ENCODE measurements at regions of chr5 and their contacts with region 1.

Region 1: DNA sequence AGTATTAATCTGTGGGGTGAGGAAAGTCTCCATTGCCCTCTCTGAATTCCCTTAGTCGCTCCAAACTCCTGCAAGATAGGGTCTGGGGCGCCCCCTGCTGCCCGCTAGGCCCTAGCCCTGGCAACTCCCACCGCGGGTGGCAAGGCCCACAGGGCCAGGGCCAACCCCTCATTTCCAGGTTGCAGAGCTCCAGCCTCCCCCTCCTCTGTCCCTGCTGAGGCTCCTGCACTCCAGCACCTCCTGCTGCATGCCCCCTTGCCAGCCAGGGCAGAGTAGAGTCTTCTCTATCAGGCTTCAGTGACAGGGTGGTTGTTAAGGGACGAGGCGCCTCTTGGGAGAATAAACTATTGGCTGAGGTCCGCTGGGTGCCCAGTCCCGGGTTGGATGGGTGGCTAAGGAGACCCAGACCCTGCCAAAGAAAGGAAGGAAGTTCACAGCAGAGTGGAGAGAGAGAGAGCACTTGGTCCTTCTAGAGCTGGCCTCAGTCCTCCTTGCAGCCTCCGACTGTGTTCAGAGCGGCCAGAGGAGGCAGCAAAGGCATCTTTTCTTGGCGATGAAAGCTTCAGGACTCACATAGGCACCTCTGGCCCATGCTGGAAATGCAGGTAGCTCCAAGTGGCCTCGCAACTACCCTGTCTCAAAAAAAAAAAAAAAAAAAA is 45.6 kb downstream of the SAR1B start:
- DNase-seq: peak; percentile 95
- ATAC-seq: peak; percentile 89
- H3K4me3 Mint-ChIP-seq: peak overlapping the region; percentile 22
- H3K27ac Mint-ChIP-seq: peak overlapping the region; percentile 93
- H3K4me1 Mint-ChIP-seq: peaks cover 17% of the 10 kb centered on the region
- H3K27me3 Mint-ChIP-seq: no peaks in the 10 kb centered on the region
- CTCF ChIP-seq: peak; percentile 76

Region 2: DNA sequence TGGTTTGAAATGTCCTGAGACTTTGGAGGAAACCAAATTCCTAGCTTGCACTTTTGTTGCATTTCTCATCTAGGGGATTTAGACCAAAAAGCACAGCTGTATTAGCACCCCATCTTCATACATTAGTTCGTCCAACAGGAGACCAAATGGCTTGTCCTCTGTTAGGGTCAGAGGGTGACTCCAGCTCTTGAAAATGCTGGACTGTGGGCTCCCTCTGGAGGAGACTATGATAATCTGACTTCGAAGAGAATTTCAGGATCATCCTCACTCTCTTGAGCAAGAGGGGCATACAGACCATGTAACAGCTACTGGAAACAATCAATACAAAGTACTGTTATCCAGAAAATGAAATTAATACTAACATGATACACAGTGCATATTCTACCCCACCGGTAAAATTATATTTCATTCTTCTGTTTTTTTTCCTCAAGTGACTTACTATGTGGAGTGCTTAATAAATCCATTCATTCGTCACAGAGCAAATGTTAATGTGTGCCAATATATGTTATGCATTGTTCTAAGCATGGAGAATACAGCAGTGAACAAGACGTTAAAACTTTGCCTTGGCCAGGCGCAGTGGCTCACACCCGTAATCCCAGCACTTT is 297.4 kb before region 1 on chr5:
- CTCF ChIA-PET with region 1: interaction called, 14 read pairs
- POLR2A ChIA-PET with region 1: no interaction called
- DNase-seq: peak; percentile 50
- ATAC-seq: peak; percentile 100
- H3K4me3 Mint-ChIP-seq: no peak overlapping the region
- H3K27ac Mint-ChIP-seq: no peak overlapping the region
- H3K4me1 Mint-ChIP-seq: no peaks in the 10 kb centered on the region
- H3K27me3 Mint-ChIP-seq: peaks cover 19% of the 10 kb centered on the region
- CTCF ChIP-seq: peak; percentile 55

Region 3: GRCh38 chr5:134394932-134395331 is 192.1 kb before region 1 on chr5:
- CTCF ChIA-PET with region 1: interaction called, 21 read pairs
- POLR2A ChIA-PET with region 1: interaction called, 10 read pairs
- DNase-seq: no peak
- ATAC-seq: peak; percentile 48
- H3K4me3 Mint-ChIP-seq: no peak overlapping the region
- H3K27ac Mint-ChIP-seq: no peak overlapping the region
- H3K4me1 Mint-ChIP-seq: peaks cover 11% of the 10 kb centered on the region
- H3K27me3 Mint-ChIP-seq: no peaks in the 10 kb centered on the region
- CTCF ChIP-seq: no peak

Region 4: DNA sequence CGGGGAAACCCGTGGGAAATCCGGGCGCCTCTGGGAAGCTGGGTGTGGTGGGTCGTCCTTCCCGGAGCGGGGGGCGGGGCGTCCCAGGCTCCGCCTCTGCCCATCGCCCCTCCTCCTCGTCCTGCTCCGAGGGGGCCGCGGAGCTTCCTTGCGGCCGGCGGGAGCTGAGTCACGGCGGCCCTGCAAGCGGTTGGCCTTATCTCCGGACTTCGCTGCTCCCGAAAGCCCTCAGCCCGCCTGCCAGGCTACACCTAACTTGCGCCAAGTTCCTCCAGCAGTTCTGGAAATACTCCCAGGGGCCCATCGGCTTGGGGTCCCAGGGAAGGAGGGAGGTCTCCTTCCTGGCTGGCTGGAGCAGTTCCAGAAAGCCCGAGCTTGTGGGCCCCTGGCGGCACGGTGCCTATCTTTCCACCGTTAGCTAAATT is 121.2 kb before region 1 on chr5:
- CTCF ChIA-PET with region 1: interaction called, 42 read pairs
- POLR2A ChIA-PET with region 1: interaction called, 3 read pairs
- DNase-seq: peak; percentile 89
- ATAC-seq: peak; percentile 77
- H3K4me3 Mint-ChIP-seq: peak overlapping the region; percentile 86
- H3K27ac Mint-ChIP-seq: peak overlapping the region; percentile 94
- H3K4me1 Mint-ChIP-seq: peaks cover 20% of the 10 kb centered on the region
- H3K27me3 Mint-ChIP-seq: no peaks in the 10 kb centered on the region
- CTCF ChIP-seq: no peak

Region 5: GRCh38 chr5:134541736-134542376 is 45.1 kb before region 1 on chr5:
- CTCF ChIA-PET with region 1: interaction called, 21 read pairs
- POLR2A ChIA-PET with region 1: no interaction called
- DNase-seq: peak; percentile 82
- ATAC-seq: peak; percentile 13
- H3K4me3 Mint-ChIP-seq: no peak overlapping the region
- H3K27ac Mint-ChIP-seq: no peak overlapping the region
- H3K4me1 Mint-ChIP-seq: peaks cover 36% of the 10 kb centered on the region
- H3K27me3 Mint-ChIP-seq: no peaks in the 10 kb centered on the region
- CTCF ChIP-seq: no peak

Region 6: GRCh38 chr5:134626369-134627014 is 39.5 kb after region 1 on chr5:
- CTCF ChIA-PET with region 1: interaction called, 17 read pairs
- POLR2A ChIA-PET with region 1: interaction called, 3 read pairs
- DNase-seq: no peak
- ATAC-seq: no peak
- H3K4me3 Mint-ChIP-seq: no peak overlapping the region
- H3K27ac Mint-ChIP-seq: peak overlapping the region; percentile 6; the same call in 1 of the 2 replicates
- H3K4me1 Mint-ChIP-seq: no peaks in the 10 kb centered on the region
- H3K27me3 Mint-ChIP-seq: no peaks in the 10 kb centered on the region
- CTCF ChIP-seq: no peak

Region 7: DNA sequence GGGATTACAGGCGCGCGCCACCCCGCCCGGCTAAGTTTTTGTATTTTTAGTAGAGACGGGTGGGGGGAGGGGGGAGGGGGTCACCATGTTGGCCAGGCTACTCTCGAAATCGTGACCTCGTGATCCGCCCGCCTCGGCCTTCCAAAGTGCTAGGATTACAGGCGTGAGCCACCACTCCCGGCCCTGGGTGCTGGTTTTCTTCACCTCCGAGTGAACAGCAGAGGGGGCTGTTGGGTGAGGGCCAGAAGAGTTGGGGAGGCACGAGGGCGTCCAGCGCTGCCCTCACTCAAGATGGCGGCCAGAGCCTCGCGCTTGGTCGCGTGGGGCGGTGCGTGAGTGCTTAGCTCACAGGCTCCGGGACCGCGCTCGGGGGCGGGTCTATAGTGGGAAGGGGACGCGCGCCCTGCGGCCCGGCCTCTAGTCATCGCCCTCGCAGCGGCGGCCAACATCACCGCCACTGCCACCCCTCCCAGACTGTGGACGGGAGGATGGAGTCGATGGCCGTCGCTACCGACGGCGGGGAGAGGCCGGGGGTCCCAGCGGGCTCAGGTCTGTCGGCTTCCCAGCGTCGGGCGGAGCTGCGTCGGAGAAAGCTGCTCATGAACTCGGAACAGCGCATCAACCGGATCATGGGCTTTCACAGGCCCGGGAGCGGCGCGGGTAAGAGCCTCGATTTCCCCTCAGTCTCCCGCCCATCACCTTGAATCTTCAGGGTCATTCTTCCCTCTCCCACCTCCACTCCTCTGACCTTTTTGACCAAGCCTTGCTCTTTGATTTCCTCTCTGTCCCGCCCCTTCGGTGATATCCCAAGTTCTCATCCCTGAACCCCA is 151.4 kb after region 1 on chr5 and contains the start of gene CAMLG:
- CTCF ChIA-PET with region 1: interaction called, 12 read pairs
- POLR2A ChIA-PET with region 1: interaction called, 5 read pairs
- DNase-seq: peak; percentile 98
- ATAC-seq: peak; percentile 87
- H3K4me3 Mint-ChIP-seq: peak within 1 kb of the TSS; percentile 95
- H3K27ac Mint-ChIP-seq: peak within 1 kb of the TSS; percentile 95
- H3K4me1 Mint-ChIP-seq: peaks cover 8% of the 10 kb centered on the region
- H3K27me3 Mint-ChIP-seq: no peaks in the 10 kb centered on the region
- CTCF ChIP-seq: peak; percentile 43; the same call in 1 of the 2 replicates
- total RNA-seq, gene CAMLG: 39.7 to 43.9 TPM (median 42.1 TPM) in 3 replicates

Measured in WTC11 (cell line).